ENCODE measurements at regions of chr9 and their contacts with region 1.

Region 1: GRCh38 chr9:136455043-136456002 is 15.7 kb upstream of the INPP5E start:
- DNase-seq: no peak
- ATAC-seq: peak; percentile 25
- H3K4me3 ChIP-seq: no peak overlapping the region
- H3K4me3 Mint-ChIP-seq: peak overlapping the region; percentile 15
- H3K27ac ChIP-seq: no peak overlapping the region
- H3K27ac Mint-ChIP-seq: no peak overlapping the region
- H3K4me1 ChIP-seq: no peaks in the 10 kb centered on the region
- H3K4me1 Mint-ChIP-seq: no peaks in the 10 kb centered on the region
- H3K27me3 ChIP-seq: no peaks in the 10 kb centered on the region
- H3K27me3 Mint-ChIP-seq: no peaks in the 10 kb centered on the region
- CTCF ChIP-seq: no peak

Region 2: GRCh38 chr9:136170006-136170901 is 285.1 kb before region 1 on chr9:
- CTCF ChIA-PET with region 1: no interaction called
- POLR2A ChIA-PET with region 1: no interaction called
- intact Hi-C with region 1: no loop called
- DNase-seq: peak; percentile 26 to 63 (median 42)
- ATAC-seq: peak; percentile 51
- H3K4me3 ChIP-seq: no peak overlapping the region
- H3K4me3 Mint-ChIP-seq: no peak overlapping the region
- H3K27ac ChIP-seq: no peak overlapping the region
- H3K27ac Mint-ChIP-seq: no peak overlapping the region
- H3K4me1 ChIP-seq: no peaks in the 10 kb centered on the region
- H3K4me1 Mint-ChIP-seq: no peaks in the 10 kb centered on the region
- H3K27me3 ChIP-seq: peaks cover 0 to 10% of the 10 kb centered on the region in 2 experiments
- H3K27me3 Mint-ChIP-seq: peaks cover 22% of the 10 kb centered on the region
- CTCF ChIP-seq: peak; percentile 36

Region 3: GRCh38 chr9:136476369-136477150 is 21.2 kb after region 1 on chr9:
- CTCF ChIA-PET with region 1: no interaction called
- POLR2A ChIA-PET with region 1: no interaction called
- intact Hi-C with region 1: loop called in 1 of 2 experiments (anchors 2 kb)
- DNase-seq: no peak
- ATAC-seq: no peak
- H3K4me3 ChIP-seq: no peak overlapping the region
- H3K4me3 Mint-ChIP-seq: no peak overlapping the region
- H3K27ac ChIP-seq: no peak overlapping the region
- H3K27ac Mint-ChIP-seq: no peak overlapping the region
- H3K4me1 ChIP-seq: peaks cover 14% of the 10 kb centered on the region
- H3K4me1 Mint-ChIP-seq: peaks cover 31% of the 10 kb centered on the region
- H3K27me3 ChIP-seq: no peaks in the 10 kb centered on the region
- H3K27me3 Mint-ChIP-seq: no peaks in the 10 kb centered on the region
- CTCF ChIP-seq: no peak